K562 (cell line): ENCODE measurements at regions of chr10 and their contacts with region 1.

Region 1: DNA sequence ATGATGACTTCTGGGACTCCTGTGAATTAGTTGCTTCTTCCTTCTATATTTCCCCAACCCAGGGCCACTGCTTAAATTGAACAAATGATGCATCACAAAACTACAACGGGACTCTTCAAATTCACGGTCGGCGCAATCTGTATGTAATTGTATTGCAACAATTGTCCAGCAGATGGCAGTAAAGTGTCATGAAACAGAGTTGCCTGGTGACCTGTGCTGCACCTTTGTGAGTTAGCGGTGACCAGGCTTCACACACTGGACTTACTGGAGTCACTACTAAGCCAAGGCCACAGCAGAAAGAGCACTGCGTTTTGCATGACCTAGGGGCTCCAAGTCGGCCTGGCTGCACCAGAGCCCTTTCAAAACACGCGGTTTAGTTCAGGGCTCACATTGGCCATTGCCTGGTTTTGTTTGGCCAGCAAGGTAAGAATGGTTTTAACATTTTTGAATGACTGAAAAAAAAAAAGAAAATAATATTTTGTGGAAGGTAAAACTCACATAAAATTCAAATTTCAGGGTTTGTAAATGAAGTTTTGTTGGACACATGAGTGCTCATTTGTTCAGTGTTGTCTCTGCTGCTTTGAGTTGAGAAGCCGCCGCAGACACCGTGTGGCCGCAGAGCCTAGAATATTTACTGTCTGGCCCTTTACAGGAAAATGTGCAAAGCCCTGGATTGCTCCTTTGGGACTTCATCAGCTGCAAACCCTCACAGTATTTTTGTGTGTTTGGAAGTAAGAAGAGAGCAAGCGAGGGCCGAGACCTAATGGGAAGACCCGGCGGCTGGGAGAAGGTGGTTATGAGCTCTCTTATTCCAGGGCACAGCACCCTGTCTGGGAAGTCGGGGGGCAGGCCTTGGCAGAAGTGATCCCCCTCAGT is 23.2 kb upstream of the ZNF32 start:
- DNase-seq: peak; percentile 82 to 86 (median 84)
- ATAC-seq: peak; percentile 85
- H3K4me3 ChIP-seq: no peak overlapping the region
- H3K27ac ChIP-seq: no peak overlapping the region
- H3K4me1 ChIP-seq: peaks cover 0 to 10% of the 10 kb centered on the region in 2 experiments; a peak in 1 of 5 replicates
- H3K27me3 ChIP-seq: peaks cover 35 to 72% of the 10 kb centered on the region in 2 experiments
- CTCF ChIP-seq: peak; percentile 78 to 92 (median 85)
- EP300 ChIP-seq: no peak
- POLR2A ChIP-seq: no peak
- RAD21 ChIP-seq: peak; percentile 90 to 94

Region 2: DNA sequence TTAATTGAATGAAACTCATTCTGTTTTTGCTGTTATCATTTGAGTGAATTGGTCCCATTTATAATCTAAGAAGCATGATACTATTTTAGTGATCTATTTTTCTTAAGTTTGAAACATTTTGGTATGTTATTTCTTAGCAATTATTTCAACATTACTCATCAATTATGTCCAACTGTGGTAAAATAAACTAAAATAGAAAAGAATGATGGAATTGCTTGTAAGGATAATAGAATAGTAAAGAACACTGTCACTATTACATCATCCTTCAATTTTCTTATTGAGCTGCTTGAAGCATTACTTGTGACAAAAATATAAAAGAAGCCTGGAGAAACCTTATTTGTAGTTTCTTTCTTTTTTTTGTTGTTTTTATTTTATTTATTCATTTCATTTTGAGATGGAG is 192.6 kb before region 1 on chr10:
- CTCF ChIA-PET with region 1: no interaction called
- POLR2A ChIA-PET with region 1: no interaction called
- in situ Hi-C with region 1: no loop called
- intact Hi-C with region 1: loop called (anchors 10 kb)
- DNase-seq: no peak
- ATAC-seq: no peak
- H3K4me3 ChIP-seq: no peak overlapping the region
- H3K27ac ChIP-seq: no peak overlapping the region
- H3K4me1 ChIP-seq: no peaks in the 10 kb centered on the region
- H3K27me3 ChIP-seq: peaks cover 2 to 10% of the 10 kb centered on the region in 2 experiments; a peak in 2 of 5 replicates
- CTCF ChIP-seq: no peak
- EP300 ChIP-seq: no peak
- POLR2A ChIP-seq: no peak
- RAD21 ChIP-seq: no peak

Region 3: DNA sequence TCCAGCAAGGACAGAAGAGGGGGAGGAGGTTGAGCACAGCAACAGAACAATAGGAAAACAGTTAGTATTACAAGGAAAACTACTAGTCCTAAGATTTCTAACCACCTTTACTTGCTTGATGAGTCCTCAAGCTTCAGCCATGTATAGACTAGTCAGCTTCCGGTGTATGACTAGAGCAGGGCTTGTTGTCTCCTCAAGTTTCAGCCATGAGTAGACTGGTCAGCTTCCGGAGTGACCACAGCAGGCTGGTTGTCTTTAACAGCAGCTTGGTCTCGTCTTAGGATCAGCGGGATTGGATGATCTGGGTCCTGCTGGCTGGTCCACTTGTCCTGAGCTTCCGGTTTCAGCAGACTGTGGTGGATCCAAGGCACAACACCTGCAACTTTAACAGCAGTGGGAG is 86.8 kb before region 1 on chr10:
- CTCF ChIA-PET with region 1: no interaction called
- POLR2A ChIA-PET with region 1: no interaction called
- in situ Hi-C with region 1: no loop called
- intact Hi-C with region 1: no loop called
- DNase-seq: no peak
- ATAC-seq: no peak; the same call in 2 of the 3 replicates
- H3K4me3 ChIP-seq: no peak overlapping the region
- H3K27ac ChIP-seq: no peak overlapping the region
- H3K4me1 ChIP-seq: no peaks in the 10 kb centered on the region
- H3K27me3 ChIP-seq: peaks cover 0 to 10% of the 10 kb centered on the region in 2 experiments; a peak in 2 of 5 replicates
- CTCF ChIP-seq: no peak
- EP300 ChIP-seq: no peak
- POLR2A ChIP-seq: no peak
- RAD21 ChIP-seq: no peak

Region 4: GRCh38 chr10:43653746-43654145 is 18.1 kb before region 1 on chr10:
- CTCF ChIA-PET with region 1: no interaction called
- POLR2A ChIA-PET with region 1: no interaction called
- in situ Hi-C with region 1: no loop called
- intact Hi-C with region 1: no loop called
- DNase-seq: no peak
- ATAC-seq: no peak
- H3K4me3 ChIP-seq: no peak overlapping the region
- H3K27ac ChIP-seq: no peak overlapping the region
- H3K4me1 ChIP-seq: peaks cover 0 to 4% of the 10 kb centered on the region in 2 experiments; a peak in 4 of 5 replicates
- H3K27me3 ChIP-seq: peaks cover 5 to 8% of the 10 kb centered on the region in 2 experiments; a peak in 2 of 5 replicates
- CTCF ChIP-seq: no peak
- EP300 ChIP-seq: no peak
- POLR2A ChIP-seq: no peak
- RAD21 ChIP-seq: no peak

Region 5: DNA sequence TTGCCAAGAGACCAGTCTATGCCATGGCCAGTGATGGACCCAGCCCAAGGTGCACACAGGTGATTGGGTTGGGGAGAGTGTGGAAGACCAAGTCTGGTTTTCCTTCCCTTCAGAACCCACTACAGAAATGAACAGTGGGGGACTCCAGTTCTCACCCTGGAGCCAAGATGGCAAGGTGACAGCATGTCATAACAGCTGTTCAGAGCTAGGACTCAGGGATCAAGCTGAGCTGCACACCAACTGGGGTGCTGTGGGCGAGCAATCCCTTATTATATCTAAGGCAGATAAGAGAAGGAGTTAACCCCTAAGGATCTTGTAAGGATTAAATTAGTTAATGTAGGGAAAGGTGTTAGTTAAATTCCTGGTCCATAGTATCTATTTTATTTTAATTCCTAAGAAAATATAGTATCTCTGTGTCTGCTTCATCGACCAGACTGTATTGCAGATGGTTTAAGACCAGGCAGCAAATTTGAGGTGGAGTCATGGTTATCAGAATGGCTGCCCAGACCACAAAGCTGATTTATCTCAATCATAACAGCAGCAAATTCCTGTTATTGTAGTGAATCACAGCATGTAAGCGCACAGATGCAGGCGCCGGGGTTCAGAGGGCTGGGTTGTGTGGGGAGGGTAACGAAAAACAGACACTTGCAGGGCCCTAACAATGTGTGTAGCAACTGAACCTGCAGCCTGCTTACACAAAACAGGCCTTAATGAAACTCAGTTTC is 185.5 kb after region 1 on chr10:
- CTCF ChIA-PET with region 1: no interaction called
- POLR2A ChIA-PET with region 1: interaction called, 3 read pairs
- in situ Hi-C with region 1: no loop called
- intact Hi-C with region 1: loop called (anchors 10 kb)
- DNase-seq: no peak
- ATAC-seq: no peak
- H3K4me3 ChIP-seq: no peak overlapping the region
- H3K27ac ChIP-seq: no peak overlapping the region
- H3K4me1 ChIP-seq: no peaks in the 10 kb centered on the region
- H3K27me3 ChIP-seq: peaks cover 5 to 12% of the 10 kb centered on the region in 2 experiments; a peak in 3 of 5 replicates
- CTCF ChIP-seq: no peak
- EP300 ChIP-seq: no peak
- POLR2A ChIP-seq: no peak
- RAD21 ChIP-seq: no peak

Region 6: GRCh38 chr10:44310762-44311562 is 639.1 kb after region 1 on chr10:
- CTCF ChIA-PET with region 1: interaction called, 5 read pairs
- POLR2A ChIA-PET with region 1: no interaction called
- in situ Hi-C with region 1: no loop called
- intact Hi-C with region 1: loop called (anchors 10 kb)
- DNase-seq: peak; percentile 88 to 93 (median 90)
- ATAC-seq: peak; percentile 100
- H3K4me3 ChIP-seq: no peak overlapping the region
- H3K27ac ChIP-seq: no peak overlapping the region
- H3K4me1 ChIP-seq: peaks cover 5 to 14% of the 10 kb centered on the region in 2 experiments; a peak in 4 of 5 replicates
- H3K27me3 ChIP-seq: peaks cover 0 to 11% of the 10 kb centered on the region in 2 experiments; a peak in 2 of 5 replicates
- CTCF ChIP-seq: peak; percentile 95 to 99 (median 98)
- EP300 ChIP-seq: peak; percentile 46; the same call in 1 of the 2 replicates
- POLR2A ChIP-seq: no peak
- RAD21 ChIP-seq: peak; percentile 51 to 70; a peak in 3 of 4 replicates

Region 7: DNA sequence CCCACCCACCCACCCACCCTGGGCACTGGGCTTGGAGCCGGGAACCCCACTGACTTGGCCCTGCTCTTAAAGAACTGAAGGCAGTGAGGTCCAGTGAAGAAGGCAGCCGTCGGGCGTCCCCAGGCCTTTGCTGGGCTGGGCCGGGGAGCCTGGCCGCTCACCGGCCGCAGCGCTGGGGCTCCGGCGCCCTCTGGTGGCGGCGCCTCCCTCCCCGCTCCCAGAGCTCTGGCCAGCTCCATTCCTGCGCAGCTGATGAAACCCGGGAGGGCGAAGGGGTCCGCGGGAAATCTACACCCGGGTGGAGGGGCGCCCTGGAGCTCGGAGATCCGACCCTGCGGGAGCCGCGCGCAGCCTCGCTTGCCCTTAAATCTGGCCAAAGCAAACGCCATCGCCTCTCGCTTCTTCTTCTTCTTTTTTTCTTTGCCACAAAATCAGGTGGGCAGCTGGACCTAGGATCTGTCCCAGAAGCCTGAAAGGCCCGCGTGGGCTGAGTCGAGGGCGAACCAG is 714.7 kb after region 1 on chr10:
- CTCF ChIA-PET with region 1: interaction called, 6 read pairs
- POLR2A ChIA-PET with region 1: no interaction called
- in situ Hi-C with region 1: loop called (anchors 5 kb)
- intact Hi-C with region 1: loop called (anchors 2 kb)
- DNase-seq: peak; percentile 65 to 89 (median 88)
- ATAC-seq: peak; percentile 99
- H3K4me3 ChIP-seq: no peak overlapping the region
- H3K27ac ChIP-seq: no peak overlapping the region
- H3K4me1 ChIP-seq: peaks cover 0 to 21% of the 10 kb centered on the region in 2 experiments; a peak in 2 of 5 replicates
- H3K27me3 ChIP-seq: peaks cover 16 to 53% of the 10 kb centered on the region in 2 experiments; a peak in 3 of 5 replicates
- CTCF ChIP-seq: peak; percentile 84 to 92 (median 92)
- EP300 ChIP-seq: no peak
- POLR2A ChIP-seq: no peak
- RAD21 ChIP-seq: peak; percentile 81 to 82

Region 8: DNA sequence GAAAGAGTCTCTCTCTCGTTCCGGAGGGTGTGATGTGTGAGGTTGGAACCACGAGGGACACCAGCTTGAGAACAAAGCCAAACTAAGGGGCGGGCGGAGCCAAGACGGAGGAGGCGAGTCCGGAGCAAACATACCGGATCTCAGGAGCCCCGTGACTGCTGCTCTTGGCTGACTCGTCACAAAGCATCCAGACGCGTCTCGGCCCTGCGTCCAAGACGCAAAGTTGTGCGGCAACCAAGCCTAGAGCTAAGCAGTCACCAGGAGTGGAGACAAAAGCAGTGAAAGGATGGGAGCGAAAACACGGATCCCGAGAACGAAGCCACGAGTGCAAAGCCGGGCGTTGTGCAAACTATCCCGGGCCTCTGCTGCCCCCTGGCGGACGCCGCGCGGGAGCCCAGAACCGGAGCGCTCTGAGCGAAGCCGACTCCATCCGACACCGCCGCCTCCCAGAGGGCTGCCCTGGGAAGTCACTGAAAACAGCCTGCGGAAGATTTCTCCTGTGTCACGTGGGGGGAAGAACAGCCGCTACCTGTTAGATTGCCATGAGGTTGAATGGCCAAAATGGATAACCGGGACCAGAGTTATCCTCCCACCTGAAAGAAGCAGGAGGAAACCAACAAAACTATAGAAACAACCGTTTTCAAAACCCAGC is 1192.9 kb after region 1 on chr10:
- CTCF ChIA-PET with region 1: interaction called, 3 read pairs
- POLR2A ChIA-PET with region 1: no interaction called
- in situ Hi-C with region 1: loop called (anchors 10 kb)
- intact Hi-C with region 1: loop called (anchors 5 kb)
- DNase-seq: peak; percentile 86 to 93 (median 92)
- ATAC-seq: peak; percentile 99
- H3K4me3 ChIP-seq: peak overlapping the region; percentile 11; the same call in 1 of the 2 replicates
- H3K27ac ChIP-seq: no peak overlapping the region
- H3K4me1 ChIP-seq: peaks cover 0 to 15% of the 10 kb centered on the region in 2 experiments; a peak in 2 of 5 replicates
- H3K27me3 ChIP-seq: peaks cover 7 to 34% of the 10 kb centered on the region in 2 experiments; a peak in 4 of 5 replicates
- CTCF ChIP-seq: peak; percentile 94 to 98 (median 97)
- EP300 ChIP-seq: no peak
- POLR2A ChIP-seq: no peak
- RAD21 ChIP-seq: peak; percentile 80 to 87